ENCODE measurements at regions of chr1 and their contacts with region 1.

Region 1: GRCh38 chr1:27332536-27333281 is 9.1 kb upstream of the SYTL1 start:
- DNase-seq: peak; percentile 73
- ATAC-seq: peak; percentile 91
- H3K4me3 Mint-ChIP-seq: no peak overlapping the region
- H3K27ac Mint-ChIP-seq: no peak overlapping the region
- H3K4me1 Mint-ChIP-seq: peaks cover 27% of the 10 kb centered on the region
- H3K27me3 Mint-ChIP-seq: no peaks in the 10 kb centered on the region
- CTCF ChIP-seq: peak; percentile 94

Region 2: GRCh38 chr1:27306892-27307761 is 25.6 kb before region 1 on chr1:
- CTCF ChIA-PET with region 1: interaction called, 11 read pairs
- POLR2A ChIA-PET with region 1: no interaction called
- intact Hi-C with region 1: no loop called
- DNase-seq: no peak
- ATAC-seq: peak; percentile 27
- H3K4me3 Mint-ChIP-seq: no peak overlapping the region
- H3K27ac Mint-ChIP-seq: no peak overlapping the region
- H3K4me1 Mint-ChIP-seq: no peaks in the 10 kb centered on the region
- H3K27me3 Mint-ChIP-seq: no peaks in the 10 kb centered on the region
- CTCF ChIP-seq: no peak

Region 3: GRCh38 chr1:27314169-27314568 is 18.5 kb before region 1 on chr1:
- CTCF ChIA-PET with region 1: interaction called, 15 read pairs
- POLR2A ChIA-PET with region 1: interaction called, 4 read pairs
- intact Hi-C with region 1: no loop called
- DNase-seq: no peak
- ATAC-seq: no peak
- H3K4me3 Mint-ChIP-seq: no peak overlapping the region
- H3K27ac Mint-ChIP-seq: no peak overlapping the region
- H3K4me1 Mint-ChIP-seq: no peaks in the 10 kb centered on the region
- H3K27me3 Mint-ChIP-seq: no peaks in the 10 kb centered on the region
- CTCF ChIP-seq: no peak

Region 4: DNA sequence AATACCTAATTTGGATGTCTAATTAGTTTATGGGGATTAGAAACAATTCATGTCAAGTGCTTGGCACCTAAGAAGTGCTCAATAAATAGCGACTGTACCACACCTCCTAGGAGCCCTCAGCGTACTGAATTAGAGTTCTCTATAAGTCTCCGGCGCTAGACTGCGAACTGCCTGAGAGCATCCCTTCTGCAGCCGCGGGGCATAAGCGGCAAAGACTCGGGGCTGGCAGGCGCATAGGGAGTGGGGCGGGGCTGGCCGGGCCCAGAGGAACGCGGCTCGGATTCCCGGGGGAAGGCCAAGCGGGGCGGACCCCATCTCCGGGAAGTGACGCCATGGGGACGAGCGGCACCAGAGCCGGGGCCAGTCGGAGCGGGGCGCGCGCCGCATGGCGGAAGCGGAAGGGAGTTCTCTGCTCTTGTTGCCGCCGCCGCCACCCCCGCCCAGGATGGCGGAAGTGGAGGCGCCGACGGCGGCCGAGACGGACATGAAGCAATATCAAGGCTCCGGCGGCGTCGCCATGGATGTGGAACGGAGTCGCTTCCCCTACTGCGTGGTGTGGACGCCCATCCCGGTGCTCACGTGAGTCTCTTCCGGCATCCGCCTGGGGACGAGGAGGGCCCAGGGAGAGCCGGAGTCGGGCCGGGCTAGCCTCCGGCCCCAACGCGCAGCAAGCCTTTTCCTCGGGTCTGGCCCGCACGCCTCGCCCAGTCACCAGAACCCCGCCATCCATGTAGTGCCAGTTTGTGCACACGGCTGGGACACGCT is 10.7 kb before region 1 on chr1 and contains the start of gene TMEM222:
- CTCF ChIA-PET with region 1: interaction called, 39 read pairs
- POLR2A ChIA-PET with region 1: interaction called, 8 read pairs
- intact Hi-C with region 1: no loop called
- DNase-seq: peak; percentile 97
- ATAC-seq: peak; percentile 98
- H3K4me3 Mint-ChIP-seq: peak within 1 kb of the TSS; percentile 95
- H3K27ac Mint-ChIP-seq: peak within 1 kb of the TSS; percentile 95
- H3K4me1 Mint-ChIP-seq: peaks cover 39% of the 10 kb centered on the region
- H3K27me3 Mint-ChIP-seq: no peaks in the 10 kb centered on the region
- CTCF ChIP-seq: no peak
- total RNA-seq, gene TMEM222: 22.0 to 25.4 TPM

Region 5: GRCh38 chr1:27349784-27350662 is 17.3 kb after region 1 on chr1:
- CTCF ChIA-PET with region 1: interaction called, 24 read pairs
- POLR2A ChIA-PET with region 1: interaction called, 4 read pairs
- intact Hi-C with region 1: no loop called
- DNase-seq: no peak
- ATAC-seq: peak; percentile 28
- H3K4me3 Mint-ChIP-seq: no peak overlapping the region
- H3K27ac Mint-ChIP-seq: no peak overlapping the region
- H3K4me1 Mint-ChIP-seq: peaks cover 19% of the 10 kb centered on the region
- H3K27me3 Mint-ChIP-seq: no peaks in the 10 kb centered on the region
- CTCF ChIP-seq: no peak

Region 6: GRCh38 chr1:27357281-27358037 is 24.8 kb after region 1 on chr1:
- CTCF ChIA-PET with region 1: interaction called, 32 read pairs
- POLR2A ChIA-PET with region 1: interaction called, 4 read pairs
- intact Hi-C with region 1: no loop called
- DNase-seq: peak; percentile 89
- ATAC-seq: peak; percentile 67
- H3K4me3 Mint-ChIP-seq: peak overlapping the region; percentile 75
- H3K27ac Mint-ChIP-seq: peak overlapping the region; percentile 90
- H3K4me1 Mint-ChIP-seq: peaks cover 44% of the 10 kb centered on the region
- H3K27me3 Mint-ChIP-seq: peaks cover 2% of the 10 kb centered on the region
- CTCF ChIP-seq: peak; percentile 99

Region 7: DNA sequence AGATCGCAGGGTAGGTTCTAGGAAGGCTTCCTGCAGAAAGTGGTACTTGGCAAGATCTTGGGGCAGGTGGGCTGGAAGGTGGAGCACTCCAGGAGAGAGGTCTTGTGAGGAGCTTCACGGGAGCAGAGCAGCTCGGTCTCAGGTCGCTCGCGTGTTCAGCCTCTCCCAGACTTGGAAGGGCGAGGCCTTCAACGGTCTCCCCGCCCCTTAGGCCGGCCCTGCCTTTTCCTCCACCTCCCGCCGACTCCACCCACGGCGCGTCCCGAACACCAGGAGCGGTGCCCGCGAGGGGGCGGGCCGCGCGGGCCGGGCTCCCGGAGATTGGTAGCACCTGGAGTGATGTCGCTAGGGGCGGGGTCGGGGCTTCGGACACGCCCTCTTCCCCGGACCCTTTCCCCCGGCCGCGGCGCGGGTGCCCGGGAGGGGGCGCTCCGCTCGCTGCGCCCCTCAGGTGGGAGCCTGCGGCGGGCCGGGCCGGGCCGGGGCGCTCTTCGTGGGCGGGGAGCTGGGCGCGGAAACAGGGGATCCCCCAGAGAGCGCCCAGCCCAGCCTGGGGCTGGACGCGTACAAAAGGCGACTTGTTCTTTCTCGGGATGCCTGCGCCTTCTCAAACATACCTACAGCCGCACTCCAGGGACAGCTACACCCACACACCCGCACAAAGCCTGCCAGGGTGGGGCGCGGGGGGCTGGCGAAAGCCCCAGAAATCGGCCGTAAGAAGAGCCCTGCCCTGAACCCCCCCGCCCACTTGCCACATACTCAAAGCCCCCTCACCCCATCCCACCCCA is 235.8 kb after region 1 on chr1:
- CTCF ChIA-PET with region 1: no interaction called
- POLR2A ChIA-PET with region 1: no interaction called
- intact Hi-C with region 1: no loop called
- DNase-seq: peak; percentile 92
- ATAC-seq: peak; percentile 91
- H3K4me3 Mint-ChIP-seq: peak overlapping the region; percentile 44
- H3K27ac Mint-ChIP-seq: peak overlapping the region; percentile 32
- H3K4me1 Mint-ChIP-seq: peaks cover 25% of the 10 kb centered on the region
- H3K27me3 Mint-ChIP-seq: no peaks in the 10 kb centered on the region
- CTCF ChIP-seq: peak; percentile 73

Region 8: GRCh38 chr1:27772933-27773825 is 440.5 kb after region 1 on chr1 and contains the start of gene STX12:
- CTCF ChIA-PET with region 1: no interaction called
- POLR2A ChIA-PET with region 1: no interaction called
- intact Hi-C with region 1: no loop called
- DNase-seq: peak; percentile 100
- ATAC-seq: peak; percentile 96
- H3K4me3 Mint-ChIP-seq: peak within 1 kb of the TSS; percentile 94
- H3K27ac Mint-ChIP-seq: peak within 1 kb of the TSS; percentile 98
- H3K4me1 Mint-ChIP-seq: peaks cover 32% of the 10 kb centered on the region
- H3K27me3 Mint-ChIP-seq: no peaks in the 10 kb centered on the region
- CTCF ChIP-seq: no peak
- total RNA-seq, gene STX12: 19.4 to 22.1 TPM